ENCODE measurements at regions of chr3 and their contacts with region 1.

Region 1: DNA sequence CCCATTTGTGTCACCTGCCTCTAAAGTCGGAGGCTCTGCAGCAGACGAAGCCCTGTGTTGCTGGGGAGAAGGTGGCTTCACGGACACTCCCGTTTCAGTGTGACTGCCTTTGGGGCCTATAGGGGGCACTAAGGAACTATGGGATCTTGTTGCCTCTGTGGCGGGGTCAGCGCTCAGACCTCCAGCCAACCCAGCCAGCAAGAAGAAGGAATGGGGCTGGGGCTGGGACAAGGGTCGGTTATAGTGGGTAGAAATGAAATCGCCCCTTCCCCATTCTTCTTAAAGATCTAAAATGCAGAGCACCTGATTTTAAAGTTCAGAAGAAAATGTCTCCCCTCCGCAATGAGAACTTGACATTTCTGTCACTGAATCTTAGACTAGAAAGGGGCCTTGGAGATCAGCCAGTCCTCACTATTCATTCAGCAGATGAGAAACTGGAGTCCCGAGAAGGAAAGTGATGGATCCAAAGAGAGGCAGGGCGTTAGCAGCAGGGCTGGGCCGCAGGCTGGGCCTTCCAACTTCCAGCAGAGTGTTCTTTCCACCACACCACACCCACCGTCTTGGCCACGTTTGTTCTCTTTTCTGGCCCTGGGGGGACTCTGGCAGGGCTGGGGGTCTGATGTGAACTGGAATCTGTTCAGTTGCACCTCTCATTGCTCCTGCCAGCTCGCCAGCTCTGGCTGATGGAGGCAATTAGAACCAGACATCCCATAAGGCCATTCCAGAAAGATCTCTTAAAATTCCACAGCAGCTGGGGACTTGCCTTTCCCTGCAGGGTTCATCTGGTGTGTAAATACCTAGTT is 195.4 kb downstream of the OPA1 start:
- DNase-seq: peak in 9 of 10 donors; percentile 7 to 68 (median 51)
- H3K4me3 ChIP-seq: no peak overlapping the region
- H3K27ac ChIP-seq: peak overlapping the region in 3 of 59 donors; percentile 8 to 31 (median 21)
- H3K27me3 ChIP-seq: peaks cover 0 to 11% (median 0%) of the 10 kb centered on the region in 45 donors
- CTCF ChIP-seq: peak; percentile 20 to 88 (median 75)

Region 2: DNA sequence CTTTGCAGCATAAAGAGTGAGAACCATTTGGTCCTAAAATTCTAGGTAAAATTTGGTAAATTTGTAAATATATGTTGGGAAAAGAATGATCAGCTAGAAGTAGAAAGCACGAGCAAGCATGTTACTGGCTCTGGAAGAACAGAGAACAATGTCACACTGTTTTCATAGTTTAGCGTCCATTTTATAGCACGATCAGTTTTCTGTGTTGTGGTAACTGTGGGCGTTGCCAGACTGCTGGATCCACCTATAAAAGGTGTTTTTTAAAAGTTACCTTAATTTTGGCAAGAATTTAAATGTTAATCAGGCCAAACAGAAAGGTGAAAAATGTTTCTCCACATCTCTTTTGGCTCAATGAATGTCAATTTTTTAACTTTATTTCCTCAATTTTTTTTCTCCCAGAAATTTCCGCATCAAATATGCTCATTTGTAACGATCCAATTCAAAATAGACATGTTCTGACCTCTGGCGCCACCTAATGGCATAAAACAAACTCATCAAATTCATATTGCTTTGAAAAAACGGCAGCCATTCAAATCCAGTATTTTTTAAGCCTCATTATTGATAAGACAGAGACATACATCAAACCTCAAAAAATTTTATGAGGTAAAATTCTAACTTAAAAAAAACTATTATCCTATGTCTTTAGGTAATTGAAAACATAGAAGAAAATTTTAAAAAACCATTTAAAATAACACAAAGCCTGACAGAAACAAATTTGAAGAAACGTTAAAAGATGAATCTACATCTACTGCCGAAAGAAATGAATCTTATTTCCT is 616.2 kb after region 1 on chr3:
- intact Hi-C with region 1: loop called (anchors 10 kb)
- DNase-seq: peak in 1 of 10 donors; percentile 33
- H3K4me3 ChIP-seq: no peak overlapping the region
- H3K27ac ChIP-seq: peak overlapping the region in 3 of 59 donors; percentile 8 to 46 (median 37)
- H3K27me3 ChIP-seq: peaks cover 0 to 7% (median 0%) of the 10 kb centered on the region in 45 donors
- CTCF ChIP-seq: peak; percentile 60 to 92 (median 78)